ENCODE measurements at regions of chr16 and their contacts with region 1.

Region 1: GRCh38 chr16:22070361-22071330 is 21.7 kb upstream of the VWA3A start:
- DNase-seq: no peak
- ATAC-seq: no peak
- H3K4me3 ChIP-seq: no peak overlapping the region
- H3K27ac ChIP-seq: no peak overlapping the region
- H3K4me1 ChIP-seq: peaks cover 0 to 4% of the 10 kb centered on the region in 2 experiments; a peak in 2 of 4 replicates
- H3K27me3 ChIP-seq: no peaks in the 10 kb centered on the region
- CTCF ChIP-seq: no peak
- POLR2A ChIP-seq: no peak
- RAD21 ChIP-seq: no peak

Region 2: GRCh38 chr16:20763461-20764232 is 1307.0 kb before region 1 on chr16 and contains the start of gene ACSM3:
- CTCF ChIA-PET with region 1: no interaction called
- POLR2A ChIA-PET with region 1: no interaction called
- RAD21 ChIA-PET with region 1: no interaction called
- intact Hi-C with region 1: no loop called
- DNase-seq: peak; percentile 65
- ATAC-seq: peak; percentile 100
- H3K4me3 ChIP-seq: peak within 1 kb of the TSS; percentile 34 to 51
- H3K27ac ChIP-seq: 0 out of 2 replicates have a peak within 1 kb of the TSS, but pooled peaks have one; percentile 12
- H3K4me1 ChIP-seq: peaks cover 10 to 12% of the 10 kb centered on the region in 2 experiments
- H3K27me3 ChIP-seq: no peaks in the 10 kb centered on the region
- CTCF ChIP-seq: no peak
- POLR2A ChIP-seq: no peak
- RAD21 ChIP-seq: no peak
- total RNA-seq, gene ACSM3: 15.0 TPM

Region 3: GRCh38 chr16:22055878-22056277 is 14.8 kb before region 1 on chr16:
- CTCF ChIA-PET with region 1: no interaction called
- POLR2A ChIA-PET with region 1: interaction called, 3 read pairs
- RAD21 ChIA-PET with region 1: no interaction called
- intact Hi-C with region 1: loop called (anchors 2 kb)
- DNase-seq: no peak
- ATAC-seq: no peak
- H3K4me3 ChIP-seq: no peak overlapping the region
- H3K27ac ChIP-seq: no peak overlapping the region
- H3K4me1 ChIP-seq: peaks cover 22 to 26% of the 10 kb centered on the region in 2 experiments
- H3K27me3 ChIP-seq: no peaks in the 10 kb centered on the region
- CTCF ChIP-seq: no peak
- POLR2A ChIP-seq: no peak
- RAD21 ChIP-seq: no peak

Measured in HCT116 (cell line).